Activated CD4-positive, alpha-beta T cell treated with anti-CD3 and anti-CD28 coated beads for 36 hours (primary cell): ENCODE measurements at regions of chr1 and their contacts with region 1.

Region 1: GRCh38 chr1:40691538-40692428 is at the start of gene NFYC:
- DNase-seq: peak; percentile 98
- ATAC-seq: peak; percentile 87
- H3K4me3 Mint-ChIP-seq: peak within 1 kb of the TSS; percentile 100
- H3K27ac Mint-ChIP-seq: peak within 1 kb of the TSS; percentile 97
- H3K4me1 Mint-ChIP-seq: peaks cover 56% of the 10 kb centered on the region
- H3K27me3 Mint-ChIP-seq: no peaks in the 10 kb centered on the region
- total RNA-seq, gene NFYC: 53.6 to 85.4 TPM

Region 2: GRCh38 chr1:39672551-39672947 is 1019.2 kb before region 1 on chr1:
- CTCF ChIA-PET with region 1: no interaction called
- POLR2A ChIA-PET with region 1: no interaction called
- intact Hi-C with region 1: no loop called
- DNase-seq: peak; percentile 59
- ATAC-seq: peak; percentile 39
- H3K4me3 Mint-ChIP-seq: peak overlapping the region; percentile 31
- H3K27ac Mint-ChIP-seq: no peak overlapping the region
- H3K4me1 Mint-ChIP-seq: peaks cover 7% of the 10 kb centered on the region
- H3K27me3 Mint-ChIP-seq: peaks cover 27% of the 10 kb centered on the region

Region 3: GRCh38 chr1:40040511-40041465 is 651.0 kb before region 1 on chr1 and contains the start of gene CAP1:
- CTCF ChIA-PET with region 1: no interaction called
- POLR2A ChIA-PET with region 1: no interaction called
- intact Hi-C with region 1: loop called (anchors 2 to 5 kb)
- DNase-seq: peak; percentile 100
- ATAC-seq: peak; percentile 93
- H3K4me3 Mint-ChIP-seq: peak within 1 kb of the TSS; percentile 99
- H3K27ac Mint-ChIP-seq: peak within 1 kb of the TSS; percentile 99
- H3K4me1 Mint-ChIP-seq: peaks cover 58% of the 10 kb centered on the region
- H3K27me3 Mint-ChIP-seq: no peaks in the 10 kb centered on the region
- total RNA-seq, gene CAP1: 527 to 553 TPM

Region 4: DNA sequence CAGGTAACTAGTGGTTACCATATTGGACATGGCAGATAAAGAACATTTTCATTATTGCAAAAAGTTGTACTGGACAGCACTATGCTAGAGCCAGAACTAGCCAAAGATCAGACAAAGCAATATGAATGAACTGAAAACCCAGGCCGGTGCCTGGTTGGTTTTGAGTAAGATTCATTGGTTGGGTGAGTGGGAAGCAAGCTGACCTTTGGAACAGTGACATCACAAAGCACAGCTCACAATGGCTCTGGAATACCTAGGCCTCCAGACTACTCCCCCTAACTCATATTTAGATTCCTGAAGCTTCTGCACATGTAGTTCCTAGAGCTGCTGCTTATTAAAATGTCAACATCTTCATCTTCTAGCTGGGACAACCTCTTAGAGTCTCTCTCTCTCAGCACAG is 444.1 kb before region 1 on chr1 and contains the start of gene TMCO2:
- CTCF ChIA-PET with region 1: no interaction called
- POLR2A ChIA-PET with region 1: no interaction called
- intact Hi-C with region 1: no loop called
- DNase-seq: no peak
- ATAC-seq: no peak
- H3K4me3 Mint-ChIP-seq: no peak within 1 kb of the TSS
- H3K27ac Mint-ChIP-seq: no peak within 1 kb of the TSS
- H3K4me1 Mint-ChIP-seq: peaks cover 17% of the 10 kb centered on the region
- H3K27me3 Mint-ChIP-seq: peaks cover 3% of the 10 kb centered on the region
- total RNA-seq, gene TMCO2: not detected

Region 5: GRCh38 chr1:40257688-40258444 is 433.9 kb before region 1 on chr1 and contains the start of gene ZMPSTE24:
- CTCF ChIA-PET with region 1: no interaction called
- POLR2A ChIA-PET with region 1: no interaction called
- intact Hi-C with region 1: loop called in 1 of 2 experiments (anchors 5 kb)
- DNase-seq: peak; percentile 98
- ATAC-seq: peak; percentile 97
- H3K4me3 Mint-ChIP-seq: peak within 1 kb of the TSS; percentile 99
- H3K27ac Mint-ChIP-seq: peak within 1 kb of the TSS; percentile 100
- H3K4me1 Mint-ChIP-seq: peaks cover 47% of the 10 kb centered on the region
- H3K27me3 Mint-ChIP-seq: no peaks in the 10 kb centered on the region
- total RNA-seq, gene ZMPSTE24: 20.7 to 23.0 TPM

Region 6: DNA sequence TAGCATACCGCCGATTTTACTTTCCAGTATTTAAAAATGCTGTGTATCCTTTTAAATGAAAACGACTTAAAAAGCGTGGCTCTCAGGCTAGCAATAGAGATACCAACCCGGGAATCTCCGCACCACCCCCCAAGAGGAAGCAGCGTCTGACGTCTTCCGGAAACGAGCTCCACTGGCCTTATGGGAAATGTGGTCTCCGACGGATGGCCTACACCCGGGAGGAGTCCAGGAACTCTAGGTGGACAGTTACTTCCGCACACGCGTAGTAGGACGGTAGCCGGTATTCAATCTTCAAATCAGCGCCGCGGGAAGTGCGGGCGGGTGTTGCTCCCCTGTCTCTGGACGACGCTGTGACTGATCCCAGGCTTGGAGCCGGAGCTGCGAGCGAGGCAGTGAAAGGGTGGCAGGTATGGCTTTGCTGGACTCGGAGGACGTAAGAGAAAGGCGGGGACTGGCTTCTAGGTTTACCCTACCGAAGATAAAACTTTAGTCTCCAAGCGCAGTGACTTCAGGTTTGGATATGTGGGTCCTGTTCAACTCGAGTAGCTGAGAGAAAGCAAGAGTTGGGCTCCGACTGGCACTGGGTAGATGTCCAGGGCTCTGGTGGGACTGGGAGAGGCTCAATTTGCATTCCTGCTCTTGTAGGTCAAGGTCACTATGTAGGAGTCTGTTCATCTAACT is 160.3 kb before region 1 on chr1 and contains the start of gene ZNF684:
- CTCF ChIA-PET with region 1: interaction called, 8 read pairs
- POLR2A ChIA-PET with region 1: no interaction called
- intact Hi-C with region 1: loop called in 1 of 2 experiments (anchors 2 kb)
- DNase-seq: peak; percentile 91
- ATAC-seq: peak; percentile 98
- H3K4me3 Mint-ChIP-seq: peak within 1 kb of the TSS; percentile 88
- H3K27ac Mint-ChIP-seq: peak within 1 kb of the TSS; percentile 83
- H3K4me1 Mint-ChIP-seq: peaks cover 17% of the 10 kb centered on the region
- H3K27me3 Mint-ChIP-seq: peaks cover 6% of the 10 kb centered on the region
- total RNA-seq, gene ZNF684: 4.5 to 6.6 TPM

Region 7: DNA sequence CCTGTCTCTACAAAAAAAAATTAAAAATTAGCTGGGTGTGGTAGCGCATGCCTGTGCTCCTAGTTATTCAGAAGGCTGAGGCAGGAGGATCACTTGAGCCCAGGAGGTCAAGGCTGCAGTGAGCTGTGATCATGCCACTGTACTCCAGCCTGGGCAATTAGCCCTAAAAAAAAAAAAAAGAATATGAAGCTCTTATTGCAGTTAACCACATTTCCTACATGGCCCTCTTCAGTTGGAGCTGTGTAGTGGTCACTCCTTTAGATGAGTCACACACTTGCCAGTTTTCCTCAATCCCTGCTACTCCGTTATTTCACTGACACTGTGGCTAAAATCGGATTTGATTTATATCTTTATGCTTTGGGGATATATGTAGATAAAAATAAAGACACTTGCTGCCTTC is 11.5 kb after region 1 on chr1:
- CTCF ChIA-PET with region 1: interaction called, 20 read pairs
- POLR2A ChIA-PET with region 1: interaction called, 14 read pairs
- intact Hi-C with region 1: loop called in 1 of 2 experiments (anchors 2 kb)
- DNase-seq: no peak
- ATAC-seq: no peak
- H3K4me3 Mint-ChIP-seq: no peak overlapping the region
- H3K27ac Mint-ChIP-seq: no peak overlapping the region
- H3K4me1 Mint-ChIP-seq: peaks cover 62% of the 10 kb centered on the region
- H3K27me3 Mint-ChIP-seq: no peaks in the 10 kb centered on the region

Region 8: GRCh38 chr1:40742363-40743061 is 50.7 kb after region 1 on chr1:
- CTCF ChIA-PET with region 1: no interaction called
- POLR2A ChIA-PET with region 1: no interaction called
- intact Hi-C with region 1: loop called (anchors 1 to 2 kb)
- DNase-seq: peak; percentile 60
- ATAC-seq: peak; percentile 93
- H3K4me3 Mint-ChIP-seq: no peak overlapping the region
- H3K27ac Mint-ChIP-seq: peak overlapping the region; percentile 87
- H3K4me1 Mint-ChIP-seq: peaks cover 62% of the 10 kb centered on the region
- H3K27me3 Mint-ChIP-seq: no peaks in the 10 kb centered on the region

Region 9: GRCh38 chr1:40802078-40802741 is 110.4 kb after region 1 on chr1:
- CTCF ChIA-PET with region 1: no interaction called
- POLR2A ChIA-PET with region 1: no interaction called
- intact Hi-C with region 1: loop called in 1 of 2 experiments (anchors 1 kb)
- DNase-seq: peak; percentile 93
- ATAC-seq: peak; percentile 95
- H3K4me3 Mint-ChIP-seq: peak overlapping the region; percentile 48
- H3K27ac Mint-ChIP-seq: no peak overlapping the region
- H3K4me1 Mint-ChIP-seq: peaks cover 25% of the 10 kb centered on the region
- H3K27me3 Mint-ChIP-seq: no peaks in the 10 kb centered on the region